Panc1 (cell line): ENCODE measurements at regions of chr1 and their contacts with region 1.

Region 1: DNA sequence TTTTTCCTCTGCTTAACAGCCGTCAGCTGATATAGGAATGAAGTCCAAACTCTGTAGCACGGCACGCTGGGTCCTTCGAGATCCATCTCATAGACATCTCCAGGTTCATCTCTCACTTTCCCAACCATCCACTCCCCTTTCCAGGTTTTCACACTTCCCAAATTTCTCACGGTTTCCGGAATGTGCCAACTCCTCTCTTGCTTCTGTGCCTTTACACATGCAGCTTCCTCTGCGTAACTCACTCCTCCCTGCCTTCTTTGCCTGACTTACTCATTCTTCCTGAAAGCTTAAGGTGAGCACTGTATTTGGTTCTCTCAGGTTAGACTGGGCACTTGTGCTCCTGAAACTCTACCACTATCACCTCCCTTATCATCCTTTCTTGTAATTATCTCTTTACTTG is 168.4 kb downstream of the PCNX2 start:
- DNase-seq: no peak
- ATAC-seq: no peak
- H3K4me3 ChIP-seq: no peak overlapping the region
- H3K27ac ChIP-seq: no peak overlapping the region
- H3K4me1 ChIP-seq: no peaks in the 10 kb centered on the region
- H3K27me3 ChIP-seq: no peaks in the 10 kb centered on the region
- CTCF ChIP-seq: no peak

Region 2: DNA sequence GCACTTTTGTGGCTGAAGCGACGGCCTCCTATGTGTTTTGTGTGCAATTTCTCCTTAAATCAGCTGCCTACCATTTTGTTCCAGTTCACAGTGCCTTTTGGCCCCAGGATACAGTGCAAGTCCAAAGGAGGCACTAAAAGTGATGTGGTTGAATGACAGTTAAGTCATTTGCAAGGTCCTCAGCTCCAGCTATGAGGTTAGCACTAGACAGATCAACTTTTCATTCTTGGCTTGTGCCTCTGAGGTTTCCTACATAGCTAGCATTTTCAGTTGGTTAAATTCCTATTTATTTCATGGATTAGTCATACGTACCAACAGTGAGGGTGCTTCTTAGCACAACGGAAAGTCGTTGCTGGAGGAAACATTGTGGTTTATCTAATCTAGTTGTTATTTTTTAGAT is 236.1 kb before region 1 on chr1:
- CTCF ChIA-PET with region 1: no interaction called
- POLR2A ChIA-PET with region 1: interaction called, 12 read pairs
- in situ Hi-C with region 1: no loop called
- intact Hi-C with region 1: no loop called
- DNase-seq: no peak
- ATAC-seq: no peak
- H3K4me3 ChIP-seq: no peak overlapping the region
- H3K27ac ChIP-seq: no peak overlapping the region
- H3K4me1 ChIP-seq: no peaks in the 10 kb centered on the region
- H3K27me3 ChIP-seq: no peaks in the 10 kb centered on the region; the same call in 1 of the 2 replicates
- CTCF ChIP-seq: no peak